Activated naive CD4-positive, alpha-beta T cell treated with anti-CD3 and anti-CD28 coated beads for 36 hours (primary cell): ENCODE measurements at regions of chr18 and their contacts with region 1.

Region 1: DNA sequence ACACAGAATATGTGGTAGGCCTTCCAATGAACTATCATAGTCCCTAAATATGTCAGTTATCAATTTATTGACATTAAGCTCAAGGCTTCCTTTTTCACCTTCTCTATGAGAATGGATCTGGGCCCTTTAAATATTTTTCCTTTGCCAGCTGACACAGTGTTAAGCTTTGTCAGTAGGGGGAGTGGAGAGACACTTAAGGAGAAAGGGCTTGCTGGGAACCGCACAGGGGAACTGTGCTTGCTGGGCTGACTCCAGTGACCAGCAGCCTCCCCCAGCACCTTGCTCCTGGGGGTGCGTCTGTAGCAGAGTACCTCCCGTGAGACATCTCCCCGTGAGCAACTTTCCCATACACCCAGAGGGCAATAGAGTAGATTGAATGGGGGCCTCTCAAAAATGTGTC is 6.5 kb upstream of the PTPN2 start:
- DNase-seq: no peak
- H3K4me3 Mint-ChIP-seq: no peak overlapping the region
- H3K27ac Mint-ChIP-seq: no peak overlapping the region
- H3K4me1 Mint-ChIP-seq: peaks cover 11% of the 10 kb centered on the region
- H3K27me3 Mint-ChIP-seq: peaks cover 16% of the 10 kb centered on the region

Region 2: DNA sequence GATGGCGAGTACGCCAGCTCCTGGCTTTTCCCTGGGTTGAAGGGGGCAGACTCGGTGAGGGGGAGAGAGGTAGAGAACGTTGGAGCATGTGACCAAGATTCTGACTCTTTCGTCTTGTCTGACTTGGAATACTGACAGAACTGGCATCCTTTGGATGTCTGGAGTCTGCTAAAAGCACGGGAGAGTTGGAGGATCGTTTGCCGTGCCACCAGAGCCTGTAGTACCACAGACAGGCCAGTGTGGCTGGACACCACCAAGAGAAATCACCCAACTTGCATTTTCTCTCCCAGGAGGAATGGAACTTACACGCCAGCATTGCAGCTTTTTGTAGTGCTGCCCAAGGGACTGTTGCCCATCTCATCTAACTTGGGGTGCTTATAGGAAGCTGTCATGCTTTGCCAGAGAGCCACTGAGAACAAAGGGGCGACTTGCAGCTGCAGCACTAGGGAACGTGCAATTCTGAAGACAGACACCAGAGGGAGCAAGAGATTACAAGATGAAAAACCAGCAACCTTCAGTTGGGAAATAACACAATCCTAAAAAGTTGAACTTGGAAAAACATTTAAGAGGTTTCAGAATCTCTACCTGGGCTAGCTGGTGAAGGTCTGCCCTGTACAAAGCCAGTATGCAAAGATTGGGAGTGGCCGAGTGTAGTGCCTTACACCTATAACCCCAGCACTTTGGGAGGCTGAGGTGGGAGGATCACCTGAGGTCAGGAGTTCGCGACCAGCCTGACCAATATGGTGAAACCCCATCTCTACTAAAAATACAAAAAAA is 163.5 kb before region 1 on chr18:
- CTCF ChIA-PET with region 1: interaction called, 97 read pairs
- intact Hi-C with region 1: loop called (anchors 1 kb)
- DNase-seq: peak; percentile 72
- H3K4me3 Mint-ChIP-seq: no peak overlapping the region
- H3K27ac Mint-ChIP-seq: no peak overlapping the region
- H3K4me1 Mint-ChIP-seq: peaks cover 4% of the 10 kb centered on the region
- H3K27me3 Mint-ChIP-seq: no peaks in the 10 kb centered on the region

Region 3: GRCh38 chr18:12744103-12744502 is 146.4 kb before region 1 on chr18:
- CTCF ChIA-PET with region 1: interaction called, 21 read pairs
- intact Hi-C with region 1: loop called (anchors 1 kb)
- DNase-seq: no peak
- H3K4me3 Mint-ChIP-seq: no peak overlapping the region
- H3K27ac Mint-ChIP-seq: no peak overlapping the region
- H3K4me1 Mint-ChIP-seq: no peaks in the 10 kb centered on the region
- H3K27me3 Mint-ChIP-seq: no peaks in the 10 kb centered on the region

Region 4: DNA sequence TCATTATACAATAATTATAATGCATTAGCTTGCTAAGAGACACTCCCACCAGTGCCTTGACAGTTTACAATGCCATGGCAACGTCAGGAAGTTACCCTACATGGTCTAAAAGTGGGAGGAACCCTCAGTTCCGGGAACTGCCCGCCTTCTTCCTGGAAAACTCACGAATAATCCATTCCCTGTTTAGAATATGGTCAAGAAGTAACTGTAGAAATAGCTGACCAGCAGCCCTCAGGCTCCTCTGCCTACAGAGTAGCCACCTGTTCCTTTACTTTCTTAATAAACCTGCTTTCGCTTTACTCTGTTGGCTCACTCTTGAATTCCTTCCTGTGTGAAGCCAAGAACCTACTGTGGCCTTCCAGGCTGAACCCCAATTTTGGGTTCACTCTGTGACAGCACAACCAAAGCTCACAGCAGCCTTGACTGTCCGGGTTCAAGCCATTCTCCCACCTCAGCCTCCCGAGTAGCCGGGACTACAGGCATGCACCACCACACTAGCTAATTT is 13.6 kb after region 1 on chr18:
- CTCF ChIA-PET with region 1: interaction called, 19 read pairs
- intact Hi-C with region 1: no loop called
- DNase-seq: peak; percentile 68
- H3K4me3 Mint-ChIP-seq: no peak overlapping the region
- H3K27ac Mint-ChIP-seq: peak overlapping the region; percentile 26
- H3K4me1 Mint-ChIP-seq: peaks cover 4% of the 10 kb centered on the region
- H3K27me3 Mint-ChIP-seq: no peaks in the 10 kb centered on the region

Region 5: GRCh38 chr18:12911025-12911928 is 20.8 kb after region 1 on chr18:
- CTCF ChIA-PET with region 1: interaction called, 12 read pairs
- intact Hi-C with region 1: no loop called
- DNase-seq: peak; percentile 60
- H3K4me3 Mint-ChIP-seq: peak overlapping the region; percentile 49
- H3K27ac Mint-ChIP-seq: no peak overlapping the region
- H3K4me1 Mint-ChIP-seq: peaks cover 5% of the 10 kb centered on the region
- H3K27me3 Mint-ChIP-seq: no peaks in the 10 kb centered on the region